K562 (cell line): ENCODE measurements at regions of chr2 and their contacts with region 1.

Region 1: GRCh38 chr2:37389989-37390765 is 45.7 kb downstream of the QPCT start:
- DNase-seq: peak; percentile 27 to 55 (median 39)
- ATAC-seq: peak; percentile 64
- H3K4me3 ChIP-seq: no peak overlapping the region
- H3K27ac ChIP-seq: no peak overlapping the region
- H3K4me1 ChIP-seq: no peaks in the 10 kb centered on the region; a peak in 2 of 5 replicates
- H3K27me3 ChIP-seq: peaks cover 11 to 24% of the 10 kb centered on the region in 2 experiments; a peak in 4 of 5 replicates
- CTCF ChIP-seq: no peak
- EP300 ChIP-seq: peak; percentile 52; the same call in 1 of the 2 replicates
- POLR2A ChIP-seq: no peak
- RAD21 ChIP-seq: no peak

Region 2: GRCh38 chr2:36941867-36942266 is 448.3 kb before region 1 on chr2:
- CTCF ChIA-PET with region 1: no interaction called
- POLR2A ChIA-PET with region 1: no interaction called
- in situ Hi-C with region 1: no loop called
- intact Hi-C with region 1: no loop called
- DNase-seq: peak in 1 of 4 experiments; percentile 36
- ATAC-seq: peak; percentile 59
- H3K4me3 ChIP-seq: no peak overlapping the region
- H3K27ac ChIP-seq: peak overlapping the region; percentile 50; the same call in 1 of the 3 replicates
- H3K4me1 ChIP-seq: peaks cover 0 to 10% of the 10 kb centered on the region in 2 experiments; a peak in 3 of 5 replicates
- H3K27me3 ChIP-seq: no peaks in the 10 kb centered on the region
- CTCF ChIP-seq: no peak
- EP300 ChIP-seq: no peak
- POLR2A ChIP-seq: no peak
- RAD21 ChIP-seq: no peak

Region 3: GRCh38 chr2:37168217-37168981 is 221.8 kb before region 1 on chr2:
- CTCF ChIA-PET with region 1: no interaction called
- POLR2A ChIA-PET with region 1: no interaction called
- in situ Hi-C with region 1: no loop called
- intact Hi-C with region 1: loop called (anchors 5 kb)
- DNase-seq: peak; percentile 61 to 74 (median 64)
- ATAC-seq: peak; percentile 99
- H3K4me3 ChIP-seq: no peak overlapping the region
- H3K27ac ChIP-seq: no peak overlapping the region
- H3K4me1 ChIP-seq: no peaks in the 10 kb centered on the region
- H3K27me3 ChIP-seq: no peaks in the 10 kb centered on the region
- CTCF ChIP-seq: peak; percentile 52 to 80 (median 77)
- EP300 ChIP-seq: no peak
- POLR2A ChIP-seq: no peak
- RAD21 ChIP-seq: peak; percentile 13 to 69; a peak in 2 of 4 replicates

Region 4: DNA sequence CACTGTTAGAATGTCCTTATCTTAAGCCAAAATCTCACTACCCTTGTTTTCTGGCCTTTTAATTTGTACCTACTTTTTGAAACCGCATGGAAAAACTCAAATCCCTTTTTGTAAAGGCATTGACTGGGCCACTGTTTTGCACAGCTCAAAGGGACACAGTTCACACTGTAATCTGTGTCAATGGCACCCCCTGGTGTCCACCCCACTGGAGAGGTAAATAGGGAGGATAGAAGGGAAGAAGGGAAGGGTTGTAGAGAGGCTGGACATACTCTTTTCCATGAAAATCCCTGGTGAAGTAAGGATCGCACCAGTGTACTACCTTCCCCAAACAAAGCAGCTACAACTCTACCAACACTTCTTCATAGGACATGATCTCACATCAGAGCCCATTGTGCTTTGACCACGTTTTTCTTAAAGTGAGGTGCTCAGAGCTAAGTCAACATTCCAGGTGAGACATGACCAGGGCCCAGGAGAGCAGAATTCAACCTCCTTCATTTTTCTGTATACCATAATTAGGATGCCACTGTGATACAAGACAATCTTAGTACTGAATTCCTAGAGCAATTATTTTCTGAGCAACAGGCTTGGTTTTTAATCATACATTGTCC is 442.5 kb after region 1 on chr2:
- CTCF ChIA-PET with region 1: interaction called, 20 read pairs
- POLR2A ChIA-PET with region 1: interaction called, 3 read pairs
- in situ Hi-C with region 1: loop called (anchors 5 kb)
- intact Hi-C with region 1: no loop called
- DNase-seq: peak; percentile 49 to 79 (median 62)
- ATAC-seq: peak; percentile 99
- H3K4me3 ChIP-seq: no peak overlapping the region
- H3K27ac ChIP-seq: no peak overlapping the region
- H3K4me1 ChIP-seq: no peaks in the 10 kb centered on the region
- H3K27me3 ChIP-seq: peaks cover 0 to under 1% of the 10 kb centered on the region in 2 experiments; a peak in 1 of 5 replicates
- CTCF ChIP-seq: peak; percentile 69 to 88 (median 73)
- EP300 ChIP-seq: no peak
- POLR2A ChIP-seq: no peak
- RAD21 ChIP-seq: peak; percentile 99

Region 5: GRCh38 chr2:37982147-37982582 is 592.0 kb after region 1 on chr2:
- CTCF ChIA-PET with region 1: no interaction called
- POLR2A ChIA-PET with region 1: no interaction called
- in situ Hi-C with region 1: no loop called
- intact Hi-C with region 1: loop called (anchors 5 kb)
- DNase-seq: peak; percentile 27 to 70 (median 36)
- ATAC-seq: peak; percentile 59; the same call in 2 of the 3 replicates
- H3K4me3 ChIP-seq: no peak overlapping the region
- H3K27ac ChIP-seq: no peak overlapping the region
- H3K4me1 ChIP-seq: 0 out of 5 replicates have a peak, but pooled peaks cover 0 to 4% of the 10 kb centered on the region in 2 experiments
- H3K27me3 ChIP-seq: no peaks in the 10 kb centered on the region; a peak in 1 of 5 replicates
- CTCF ChIP-seq: peak; percentile 63 to 80 (median 77); a peak in 5 of 6 replicates
- EP300 ChIP-seq: no peak
- POLR2A ChIP-seq: no peak
- RAD21 ChIP-seq: peak; percentile 69 to 76

Region 6: DNA sequence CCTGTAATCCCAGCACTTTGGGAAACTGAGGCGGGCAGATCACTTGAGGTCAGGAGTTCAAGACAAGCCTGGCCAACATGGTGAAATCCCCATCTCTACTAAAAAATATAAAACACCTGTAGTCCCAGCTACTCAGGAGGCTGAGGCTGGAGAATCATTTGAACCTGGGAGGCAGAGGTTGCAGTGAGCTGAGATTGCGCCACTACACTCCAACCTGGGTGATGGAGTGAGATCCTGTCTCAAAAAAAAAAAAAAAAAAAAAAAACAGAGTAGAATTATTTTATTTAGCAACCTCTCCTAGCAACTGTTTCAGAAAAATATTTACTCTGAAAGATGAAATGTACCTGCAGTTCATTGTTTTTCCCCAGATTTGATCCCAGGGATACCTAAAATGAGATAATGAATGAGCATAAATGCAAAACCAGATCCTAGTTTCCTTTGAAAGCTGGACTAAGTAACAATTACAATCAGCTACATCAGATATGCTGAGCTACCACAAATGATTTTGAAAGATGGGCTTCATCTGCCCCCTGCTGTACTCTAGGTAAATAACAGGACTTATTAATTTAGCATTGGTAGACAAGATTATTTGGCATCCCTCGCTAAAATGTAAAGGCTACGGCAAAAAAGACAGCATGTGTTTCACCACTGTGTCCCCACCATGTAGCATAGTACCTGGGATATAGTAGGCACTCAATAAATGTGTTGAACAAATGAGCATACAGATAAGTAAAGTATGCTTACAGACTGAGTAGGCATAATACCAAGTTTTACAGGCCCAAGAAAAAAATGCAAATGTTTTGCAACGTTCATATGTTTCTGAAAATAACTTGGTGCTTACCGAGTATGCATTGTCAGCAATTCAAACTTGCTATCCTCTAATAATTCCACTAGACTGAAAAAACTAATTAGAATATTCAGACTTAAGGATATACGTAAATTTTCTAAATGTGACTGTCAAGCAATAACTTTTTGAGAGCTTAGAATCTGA is 884.4 kb after region 1 on chr2:
- CTCF ChIA-PET with region 1: no interaction called
- POLR2A ChIA-PET with region 1: no interaction called
- in situ Hi-C with region 1: loop called (anchors 10 kb)
- intact Hi-C with region 1: loop called (anchors 5 kb)
- DNase-seq: peak; percentile 47 to 67 (median 54)
- ATAC-seq: peak; percentile 82
- H3K4me3 ChIP-seq: no peak overlapping the region
- H3K27ac ChIP-seq: no peak overlapping the region
- H3K4me1 ChIP-seq: no peaks in the 10 kb centered on the region; a peak in 1 of 5 replicates
- H3K27me3 ChIP-seq: peaks cover 7 to 10% of the 10 kb centered on the region in 2 experiments; a peak in 3 of 5 replicates
- CTCF ChIP-seq: peak; percentile 46 to 84 (median 64); a peak in 5 of 6 replicates
- EP300 ChIP-seq: no peak
- POLR2A ChIP-seq: no peak
- RAD21 ChIP-seq: peak; percentile 95 to 96